Right ventricle myocardium superior (tissue), 1 donor: ENCODE measurements at regions of chr20 and their contacts with region 1.

Region 1: DNA sequence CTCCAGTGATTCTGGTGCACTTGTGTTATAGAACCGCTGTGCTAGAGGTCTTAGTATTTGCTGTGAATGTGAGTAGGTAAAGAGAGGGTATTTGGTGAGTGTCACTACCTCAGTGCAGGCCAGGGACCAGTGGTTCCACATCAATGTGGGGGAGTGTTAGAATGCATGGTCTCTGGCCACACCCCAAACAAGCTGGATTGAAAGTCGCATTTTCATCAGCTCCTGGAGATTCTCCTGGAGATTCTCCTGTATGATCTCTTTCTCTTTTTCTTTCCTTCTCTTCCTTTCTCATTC is 26.8 kb upstream of the BCAS1 start:
- DNase-seq: no peak
- ATAC-seq: no peak

Region 2: DNA sequence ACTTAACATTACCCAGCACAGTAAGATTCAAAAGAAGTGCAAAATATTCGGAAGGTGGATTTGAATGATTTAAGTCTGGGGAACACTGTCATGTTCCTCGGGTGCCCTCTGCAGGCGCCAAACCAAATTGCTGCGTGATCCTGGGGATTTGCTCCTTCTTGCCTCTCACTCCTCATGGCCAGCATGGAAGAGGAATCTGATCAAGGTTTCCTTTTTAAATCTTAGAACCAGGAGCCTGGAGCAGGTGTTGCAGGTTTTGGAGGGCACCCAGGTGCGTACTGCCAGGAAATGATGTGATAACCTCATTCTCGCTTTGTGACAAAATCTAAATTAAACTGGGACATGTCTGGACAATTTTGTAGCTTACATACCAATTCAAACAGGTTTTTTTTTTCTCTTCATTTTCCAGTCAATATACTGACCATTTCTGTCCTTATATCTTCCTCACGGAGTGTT is 102.6 kb after region 1 on chr20:
- intact Hi-C with region 1: loop called (anchors 2 kb)
- DNase-seq: peak; percentile 81
- ATAC-seq: peak; percentile 75

Region 3: GRCh38 chr20:54649511-54649962 is 552.4 kb after region 1 on chr20:
- intact Hi-C with region 1: loop called (anchors 5 kb)
- DNase-seq: peak; percentile 81
- ATAC-seq: peak; percentile 83